Esophagus muscularis mucosa (tissue), 4 donors: ENCODE measurements at regions of chr16 and their contacts with region 1.

Region 1: GRCh38 chr16:83967806-83968305 is at the start of gene NECAB2:
- DNase-seq: no peak
- H3K4me3 ChIP-seq: peak within 1 kb of the TSS; percentile 36 to 56 (median 48)
- H3K27ac ChIP-seq: no peak within 1 kb of the TSS
- H3K4me1 ChIP-seq: peaks cover 0 to 14% (median 10%) of the 10 kb centered on the region in 4 donors
- H3K27me3 ChIP-seq: peaks cover 0 to 24% (median 0%) of the 10 kb centered on the region in 4 donors
- CTCF ChIP-seq: peak; percentile 56 to 76 (median 63)
- EP300 ChIP-seq: no peak
- POLR2A ChIP-seq: no peak
- total RNA-seq, gene NECAB2: not detected

Region 2: GRCh38 chr16:84484579-84485254 is 516.9 kb after region 1 on chr16:
- intact Hi-C with region 1: loop called (anchors 5 kb)
- DNase-seq: no peak
- H3K4me3 ChIP-seq: no peak overlapping the region
- H3K27ac ChIP-seq: no peak overlapping the region
- H3K4me1 ChIP-seq: peaks cover 0 to 13% (median 0%) of the 10 kb centered on the region in 4 donors
- H3K27me3 ChIP-seq: no peaks in the 10 kb centered on the region
- CTCF ChIP-seq: peak; percentile 62 to 77 (median 68)
- EP300 ChIP-seq: no peak
- POLR2A ChIP-seq: no peak

Region 3: GRCh38 chr16:84504420-84505248 is 536.8 kb after region 1 on chr16 and contains the start of gene MEAK7:
- intact Hi-C with region 1: loop called (anchors 5 kb)
- DNase-seq: peak; percentile 99
- H3K4me3 ChIP-seq: peak within 1 kb of the TSS; percentile 64 to 79 (median 77)
- H3K27ac ChIP-seq: peak within 1 kb of the TSS; percentile 78 to 92 (median 87)
- H3K4me1 ChIP-seq: peaks cover 13 to 40% (median 31%) of the 10 kb centered on the region in 4 donors
- H3K27me3 ChIP-seq: no peaks in the 10 kb centered on the region
- CTCF ChIP-seq: peak in 2 of 3 experiments; percentile 9 to 10
- EP300 ChIP-seq: no peak
- POLR2A ChIP-seq: peak; percentile 27
- total RNA-seq, gene MEAK7: 8.3 to 13.0 (median 9.6) TPM